Common myeloid progenitor, CD34-positive (primary cell): ENCODE measurements at regions of chr16 and their contacts with region 1.

Region 1: GRCh38 chr16:19555162-19555937 is at the start of gene VPS35L:
- DNase-seq: peak; percentile 100
- H3K4me3 ChIP-seq: peak within 1 kb of the TSS; percentile 77 to 97 (median 96)
- H3K27ac ChIP-seq: peak within 1 kb of the TSS; percentile 86 to 90
- H3K4me1 ChIP-seq: peaks cover 3 to 15% (median 9%) of the 10 kb centered on the region in 4 experiments
- H3K27me3 ChIP-seq: no peaks in the 10 kb centered on the region

Region 2: GRCh38 chr16:19523648-19524355 is 31.5 kb before region 1 on chr16 and contains the start of gene CCP110:
- CTCF ChIA-PET with region 1: interaction called, 8 read pairs
- POLR2A ChIA-PET with region 1: interaction called, 11 read pairs
- DNase-seq: peak; percentile 96 to 99 (median 98)
- H3K4me3 ChIP-seq: peak within 1 kb of the TSS; percentile 91 to 99 (median 98)
- H3K27ac ChIP-seq: peak within 1 kb of the TSS; percentile 70 to 91
- H3K4me1 ChIP-seq: peaks cover 16 to 43% (median 37%) of the 10 kb centered on the region in 4 experiments
- H3K27me3 ChIP-seq: no peaks in the 10 kb centered on the region

Region 3: GRCh38 chr16:19542138-19542821 is 13.1 kb before region 1 on chr16:
- CTCF ChIA-PET with region 1: interaction called, 27 read pairs
- POLR2A ChIA-PET with region 1: no interaction called
- DNase-seq: no peak
- H3K4me3 ChIP-seq: no peak overlapping the region
- H3K27ac ChIP-seq: no peak overlapping the region
- H3K4me1 ChIP-seq: no peaks in the 10 kb centered on the region
- H3K27me3 ChIP-seq: no peaks in the 10 kb centered on the region

Region 4: GRCh38 chr16:19659554-19659953 is 104.2 kb after region 1 on chr16:
- CTCF ChIA-PET with region 1: no interaction called
- POLR2A ChIA-PET with region 1: no interaction called
- DNase-seq: no peak
- H3K4me3 ChIP-seq: no peak overlapping the region
- H3K27ac ChIP-seq: no peak overlapping the region
- H3K4me1 ChIP-seq: no peaks in the 10 kb centered on the region
- H3K27me3 ChIP-seq: no peaks in the 10 kb centered on the region

Region 5: DNA sequence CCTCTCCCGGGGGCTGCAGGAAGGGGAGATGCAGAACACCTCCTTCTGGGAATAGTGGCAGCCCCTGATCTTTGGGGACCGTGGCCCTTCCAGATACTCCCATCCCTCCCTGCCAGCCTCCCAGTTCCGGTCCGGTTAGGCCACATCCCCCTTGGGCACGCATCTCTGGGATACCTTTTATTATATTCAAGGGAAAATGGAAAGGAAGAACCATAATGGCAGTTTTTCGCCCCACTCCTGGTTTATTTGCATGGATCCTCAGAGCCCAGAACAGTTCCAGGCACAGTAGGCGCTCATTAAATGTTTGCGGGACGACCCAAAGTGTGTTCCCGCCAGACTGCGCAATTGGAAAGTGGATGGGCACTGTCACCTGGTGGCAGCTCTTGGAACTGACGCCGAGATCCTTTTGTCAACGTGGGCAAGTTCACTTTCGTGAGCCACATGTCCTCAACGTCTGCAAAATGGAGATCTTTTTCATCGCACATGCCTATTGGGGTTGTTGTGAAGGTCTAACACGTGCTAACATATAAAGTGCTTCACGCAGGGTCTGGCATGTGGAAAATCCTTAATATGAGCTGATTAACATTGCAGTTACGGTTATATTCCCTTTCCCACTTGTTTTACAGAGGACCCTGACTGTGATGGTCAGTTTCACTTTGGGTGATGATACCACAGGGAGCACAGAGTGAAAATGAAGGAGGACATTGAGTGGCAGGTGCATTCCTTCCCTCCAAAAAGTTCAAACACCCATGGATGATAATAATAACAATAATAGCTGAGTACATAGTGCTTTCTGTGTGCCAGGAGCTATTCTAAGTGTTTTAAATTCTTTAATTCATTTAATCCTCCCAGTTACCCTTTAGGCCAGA is 331.0 kb after region 1 on chr16:
- CTCF ChIA-PET with region 1: interaction called, 21 read pairs
- POLR2A ChIA-PET with region 1: no interaction called
- DNase-seq: peak; percentile 79 to 90 (median 86)
- H3K4me3 ChIP-seq: peak overlapping the region in 3 of 7 experiments; percentile 11 to 63 (median 19)
- H3K27ac ChIP-seq: no peak overlapping the region
- H3K4me1 ChIP-seq: peaks cover 0 to 32% (median 26%) of the 10 kb centered on the region in 4 experiments
- H3K27me3 ChIP-seq: peaks cover 2 to 47% (median 21%) of the 10 kb centered on the region in 5 experiments